MCF 10A (cell line): ENCODE measurements at regions of chr10 and their contacts with region 1.

Region 1: DNA sequence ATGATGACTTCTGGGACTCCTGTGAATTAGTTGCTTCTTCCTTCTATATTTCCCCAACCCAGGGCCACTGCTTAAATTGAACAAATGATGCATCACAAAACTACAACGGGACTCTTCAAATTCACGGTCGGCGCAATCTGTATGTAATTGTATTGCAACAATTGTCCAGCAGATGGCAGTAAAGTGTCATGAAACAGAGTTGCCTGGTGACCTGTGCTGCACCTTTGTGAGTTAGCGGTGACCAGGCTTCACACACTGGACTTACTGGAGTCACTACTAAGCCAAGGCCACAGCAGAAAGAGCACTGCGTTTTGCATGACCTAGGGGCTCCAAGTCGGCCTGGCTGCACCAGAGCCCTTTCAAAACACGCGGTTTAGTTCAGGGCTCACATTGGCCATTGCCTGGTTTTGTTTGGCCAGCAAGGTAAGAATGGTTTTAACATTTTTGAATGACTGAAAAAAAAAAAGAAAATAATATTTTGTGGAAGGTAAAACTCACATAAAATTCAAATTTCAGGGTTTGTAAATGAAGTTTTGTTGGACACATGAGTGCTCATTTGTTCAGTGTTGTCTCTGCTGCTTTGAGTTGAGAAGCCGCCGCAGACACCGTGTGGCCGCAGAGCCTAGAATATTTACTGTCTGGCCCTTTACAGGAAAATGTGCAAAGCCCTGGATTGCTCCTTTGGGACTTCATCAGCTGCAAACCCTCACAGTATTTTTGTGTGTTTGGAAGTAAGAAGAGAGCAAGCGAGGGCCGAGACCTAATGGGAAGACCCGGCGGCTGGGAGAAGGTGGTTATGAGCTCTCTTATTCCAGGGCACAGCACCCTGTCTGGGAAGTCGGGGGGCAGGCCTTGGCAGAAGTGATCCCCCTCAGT is 23.2 kb upstream of the ZNF32 start:
- DNase-seq: peak; percentile 70
- H3K4me3 Mint-ChIP-seq: no peak overlapping the region
- H3K27ac Mint-ChIP-seq: no peak overlapping the region
- H3K4me1 Mint-ChIP-seq: peaks cover 6% of the 10 kb centered on the region
- H3K27me3 Mint-ChIP-seq: peaks cover 31% of the 10 kb centered on the region
- CTCF ChIP-seq: peak; percentile 79

Region 2: DNA sequence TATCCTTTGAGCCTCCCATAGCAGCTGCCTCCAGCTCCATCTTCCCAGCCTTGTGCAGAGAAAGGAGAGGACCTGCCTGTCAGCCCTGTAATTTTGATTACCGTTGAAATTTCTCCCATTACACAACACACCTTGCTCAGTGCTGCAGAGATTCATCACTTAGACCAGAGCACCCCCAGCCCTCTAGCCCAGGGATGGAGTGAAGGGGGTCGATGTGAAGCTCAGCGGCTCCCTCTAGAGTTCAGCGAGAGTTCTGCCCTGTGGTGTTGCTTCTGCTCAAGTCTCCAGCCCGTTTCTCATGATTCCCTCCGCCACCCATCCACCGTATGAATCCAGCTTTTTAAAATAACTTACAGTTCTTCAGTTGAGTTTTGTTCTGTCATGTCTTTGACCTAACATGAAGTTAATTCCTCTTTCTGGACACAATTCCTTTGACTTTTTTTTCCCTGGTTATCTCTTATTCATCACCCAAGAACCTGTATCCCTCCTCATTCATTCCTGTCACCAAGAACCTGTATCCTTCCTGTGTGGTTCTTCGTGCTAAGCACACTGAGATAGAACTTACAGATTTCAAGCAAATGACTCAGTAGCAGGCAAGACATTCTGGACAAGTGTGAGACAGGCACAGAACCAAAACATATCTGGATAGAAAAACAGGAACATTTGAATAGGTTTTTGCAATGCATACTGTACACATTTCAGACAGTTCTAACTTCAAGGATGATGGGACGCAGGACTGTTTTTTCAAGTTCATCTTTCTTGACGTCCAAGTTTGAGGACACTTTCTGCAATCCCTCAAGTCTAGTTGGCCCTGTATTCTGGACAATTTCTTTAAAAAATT is 11.8 kb after region 1 on chr10:
- CTCF ChIA-PET with region 1: interaction called, 10 read pairs
- POLR2A ChIA-PET with region 1: no interaction called
- intact Hi-C with region 1: no loop called
- DNase-seq: no peak
- H3K4me3 Mint-ChIP-seq: no peak overlapping the region
- H3K27ac Mint-ChIP-seq: no peak overlapping the region
- H3K4me1 Mint-ChIP-seq: peaks cover 7% of the 10 kb centered on the region
- H3K27me3 Mint-ChIP-seq: peaks cover 51% of the 10 kb centered on the region
- CTCF ChIP-seq: peak; percentile 12

Region 3: GRCh38 chr10:44300666-44301649 is 629.1 kb after region 1 on chr10:
- CTCF ChIA-PET with region 1: interaction called, 3 read pairs
- POLR2A ChIA-PET with region 1: no interaction called
- intact Hi-C with region 1: loop called (anchors 1 kb)
- DNase-seq: peak; percentile 97
- H3K4me3 Mint-ChIP-seq: no peak overlapping the region
- H3K27ac Mint-ChIP-seq: no peak overlapping the region
- H3K4me1 Mint-ChIP-seq: peaks cover 16% of the 10 kb centered on the region
- H3K27me3 Mint-ChIP-seq: peaks cover 22% of the 10 kb centered on the region
- CTCF ChIP-seq: no peak

Region 4: DNA sequence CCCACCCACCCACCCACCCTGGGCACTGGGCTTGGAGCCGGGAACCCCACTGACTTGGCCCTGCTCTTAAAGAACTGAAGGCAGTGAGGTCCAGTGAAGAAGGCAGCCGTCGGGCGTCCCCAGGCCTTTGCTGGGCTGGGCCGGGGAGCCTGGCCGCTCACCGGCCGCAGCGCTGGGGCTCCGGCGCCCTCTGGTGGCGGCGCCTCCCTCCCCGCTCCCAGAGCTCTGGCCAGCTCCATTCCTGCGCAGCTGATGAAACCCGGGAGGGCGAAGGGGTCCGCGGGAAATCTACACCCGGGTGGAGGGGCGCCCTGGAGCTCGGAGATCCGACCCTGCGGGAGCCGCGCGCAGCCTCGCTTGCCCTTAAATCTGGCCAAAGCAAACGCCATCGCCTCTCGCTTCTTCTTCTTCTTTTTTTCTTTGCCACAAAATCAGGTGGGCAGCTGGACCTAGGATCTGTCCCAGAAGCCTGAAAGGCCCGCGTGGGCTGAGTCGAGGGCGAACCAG is 714.7 kb after region 1 on chr10:
- CTCF ChIA-PET with region 1: no interaction called
- POLR2A ChIA-PET with region 1: no interaction called
- intact Hi-C with region 1: loop called (anchors 1 kb)
- DNase-seq: peak; percentile 46
- H3K4me3 Mint-ChIP-seq: no peak overlapping the region
- H3K27ac Mint-ChIP-seq: no peak overlapping the region
- H3K4me1 Mint-ChIP-seq: no peaks in the 10 kb centered on the region
- H3K27me3 Mint-ChIP-seq: peaks cover 4% of the 10 kb centered on the region
- CTCF ChIP-seq: peak; percentile 84

Region 5: DNA sequence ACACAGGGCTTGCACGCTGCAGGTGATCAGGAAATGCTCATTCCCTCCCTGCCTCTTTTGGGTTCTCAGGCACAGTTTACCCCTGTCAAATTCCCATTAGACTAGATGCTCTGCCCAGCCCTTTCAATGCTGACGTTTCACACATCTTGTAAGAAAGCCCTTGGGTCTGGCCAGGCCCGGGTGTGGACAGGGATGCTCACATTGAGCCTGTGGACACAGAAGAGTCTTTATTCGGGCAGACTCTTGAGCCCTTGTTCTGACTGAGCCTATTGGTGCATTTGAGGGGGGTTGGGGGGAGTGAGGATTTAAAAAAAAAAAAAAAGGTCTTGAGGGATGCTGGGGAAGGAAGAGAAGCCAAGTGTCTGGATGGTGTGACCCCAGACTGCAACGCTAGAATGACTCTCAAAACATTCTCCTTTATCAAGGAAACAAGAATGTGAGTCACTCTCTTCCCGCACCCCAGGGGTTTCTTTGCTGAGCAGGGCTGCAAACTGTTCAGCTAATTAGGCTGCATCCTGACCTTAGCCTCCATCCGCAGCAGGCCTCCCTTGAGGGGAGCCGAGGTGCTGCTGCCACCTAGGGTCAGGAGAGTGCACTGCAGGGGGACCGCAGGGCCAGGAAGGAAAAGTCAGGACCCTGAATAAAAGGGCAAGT is 1185.6 kb after region 1 on chr10:
- CTCF ChIA-PET with region 1: interaction called, 15 read pairs
- POLR2A ChIA-PET with region 1: no interaction called
- intact Hi-C with region 1: loop called (anchors 2 kb)
- DNase-seq: peak; percentile 69
- H3K4me3 Mint-ChIP-seq: no peak overlapping the region
- H3K27ac Mint-ChIP-seq: no peak overlapping the region
- H3K4me1 Mint-ChIP-seq: no peaks in the 10 kb centered on the region
- H3K27me3 Mint-ChIP-seq: no peaks in the 10 kb centered on the region
- CTCF ChIP-seq: peak; percentile 96

Region 6: DNA sequence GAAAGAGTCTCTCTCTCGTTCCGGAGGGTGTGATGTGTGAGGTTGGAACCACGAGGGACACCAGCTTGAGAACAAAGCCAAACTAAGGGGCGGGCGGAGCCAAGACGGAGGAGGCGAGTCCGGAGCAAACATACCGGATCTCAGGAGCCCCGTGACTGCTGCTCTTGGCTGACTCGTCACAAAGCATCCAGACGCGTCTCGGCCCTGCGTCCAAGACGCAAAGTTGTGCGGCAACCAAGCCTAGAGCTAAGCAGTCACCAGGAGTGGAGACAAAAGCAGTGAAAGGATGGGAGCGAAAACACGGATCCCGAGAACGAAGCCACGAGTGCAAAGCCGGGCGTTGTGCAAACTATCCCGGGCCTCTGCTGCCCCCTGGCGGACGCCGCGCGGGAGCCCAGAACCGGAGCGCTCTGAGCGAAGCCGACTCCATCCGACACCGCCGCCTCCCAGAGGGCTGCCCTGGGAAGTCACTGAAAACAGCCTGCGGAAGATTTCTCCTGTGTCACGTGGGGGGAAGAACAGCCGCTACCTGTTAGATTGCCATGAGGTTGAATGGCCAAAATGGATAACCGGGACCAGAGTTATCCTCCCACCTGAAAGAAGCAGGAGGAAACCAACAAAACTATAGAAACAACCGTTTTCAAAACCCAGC is 1192.9 kb after region 1 on chr10:
- CTCF ChIA-PET with region 1: interaction called, 15 read pairs
- POLR2A ChIA-PET with region 1: no interaction called
- intact Hi-C with region 1: loop called (anchors 1 kb)
- DNase-seq: peak; percentile 76
- H3K4me3 Mint-ChIP-seq: peak overlapping the region; percentile 70
- H3K27ac Mint-ChIP-seq: no peak overlapping the region
- H3K4me1 Mint-ChIP-seq: no peaks in the 10 kb centered on the region
- H3K27me3 Mint-ChIP-seq: peaks cover 26% of the 10 kb centered on the region
- CTCF ChIP-seq: peak; percentile 88